Right ventricle myocardium inferior (tissue), 1 donor: ENCODE measurements at regions of chr19 and their contacts with region 1.

Region 1: GRCh38 chr19:35748106-35749020 is at the start of gene LIN37:
- DNase-seq: peak; percentile 100
- ATAC-seq: peak; percentile 88
- total RNA-seq, gene LIN37: 8.2 TPM

Region 2: DNA sequence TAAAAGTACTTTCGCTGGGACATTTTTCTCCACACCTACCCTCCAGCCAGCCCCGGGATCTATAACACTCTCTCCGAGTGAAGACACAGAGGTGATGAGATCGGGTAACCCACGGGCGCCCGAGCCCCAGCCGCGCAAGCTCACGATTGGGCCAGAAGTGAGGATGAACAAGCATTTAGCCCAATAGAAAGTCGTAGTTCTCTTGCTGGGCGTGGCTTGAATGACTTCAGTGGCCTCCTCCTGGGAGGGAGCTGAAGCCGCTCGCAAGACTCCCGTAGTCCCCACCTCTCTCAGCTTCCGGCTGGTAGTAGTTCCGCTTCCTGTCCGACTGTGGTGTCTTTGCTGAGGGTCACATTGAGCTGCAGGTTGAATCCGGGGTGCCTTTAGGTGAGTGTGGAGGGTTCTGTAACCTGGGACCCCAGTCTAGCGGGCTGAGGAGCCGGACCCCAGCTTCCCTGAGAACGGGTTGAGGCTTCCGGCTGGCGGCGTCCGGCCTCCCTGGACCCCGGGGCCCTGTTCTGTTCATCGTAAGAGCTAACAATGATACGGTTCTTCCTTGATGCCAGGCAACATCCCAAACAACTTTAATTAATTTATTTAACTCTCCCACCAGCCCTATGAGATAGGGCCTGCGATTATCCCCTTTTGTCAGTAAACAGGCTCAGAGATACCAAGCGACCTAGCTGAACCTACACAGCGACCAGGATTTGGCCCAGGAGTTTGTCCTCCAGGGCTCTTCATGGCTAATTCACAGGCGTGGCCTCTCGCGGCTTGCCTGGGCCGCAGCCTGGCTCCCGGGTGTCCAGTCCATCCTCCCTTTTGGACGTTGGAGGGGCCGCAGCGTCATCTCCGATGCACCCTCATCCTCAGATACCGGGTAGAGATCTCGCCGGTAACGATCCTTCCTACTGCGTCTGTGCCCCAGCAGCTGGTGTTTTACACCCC is 100.1 kb before region 1 on chr19 and contains the start of gene COX6B1:
- intact Hi-C with region 1: loop called (anchors 5 kb)
- DNase-seq: peak; percentile 94
- ATAC-seq: peak; percentile 75
- total RNA-seq, gene COX6B1: 1,537 TPM